HepG2 (cell line): ENCODE measurements at regions of chr1 and their contacts with region 1.

Region 1: DNA sequence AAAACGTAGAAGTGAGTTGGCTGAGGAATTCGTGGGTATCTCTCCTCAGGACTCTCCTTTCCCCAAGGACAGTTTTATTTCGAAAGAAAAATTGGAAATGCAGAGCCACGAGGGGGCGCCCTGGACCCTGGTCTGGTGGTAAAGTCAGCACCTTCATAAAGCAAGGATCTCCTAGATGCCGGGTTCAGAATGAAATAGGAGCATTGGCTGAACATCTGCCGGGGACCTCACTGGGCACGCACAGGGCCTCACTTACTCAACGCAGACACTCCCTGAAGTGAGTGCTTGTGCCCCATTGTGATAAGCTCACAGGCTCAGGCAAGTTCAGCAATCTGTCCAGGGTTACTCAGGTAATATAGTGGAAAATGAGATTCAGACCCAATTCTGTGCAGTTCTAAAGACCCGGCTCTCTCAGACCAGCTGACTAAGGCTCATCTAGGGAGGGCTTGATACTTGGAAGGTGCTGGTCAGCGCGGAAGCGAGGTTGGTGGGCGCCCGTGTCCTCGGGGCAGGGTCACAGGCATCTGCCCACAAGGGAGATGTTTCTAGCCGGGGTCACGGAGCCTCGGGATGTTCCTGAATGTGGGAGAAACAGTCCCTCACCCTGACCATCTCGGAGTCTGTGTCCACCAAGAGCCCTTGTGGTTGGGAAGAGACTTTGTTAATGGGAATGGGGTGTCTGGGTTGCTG is 55.7 kb upstream of the ETV3 start:
- DNase-seq: peak; percentile 47
- ATAC-seq: peak; percentile 60
- H3K4me3 ChIP-seq: no peak overlapping the region
- H3K27ac ChIP-seq: no peak overlapping the region
- H3K4me1 ChIP-seq: peaks cover 16% of the 10 kb centered on the region; the same call in 1 of the 2 replicates
- H3K27me3 ChIP-seq: peaks cover 2 to 18% of the 10 kb centered on the region in 2 experiments; a peak in 4 of 5 replicates
- CTCF ChIP-seq: peak; percentile 79
- EP300 ChIP-seq: no peak
- POLR2A ChIP-seq: no peak
- RAD21 ChIP-seq: peak; percentile 62

Region 2: DNA sequence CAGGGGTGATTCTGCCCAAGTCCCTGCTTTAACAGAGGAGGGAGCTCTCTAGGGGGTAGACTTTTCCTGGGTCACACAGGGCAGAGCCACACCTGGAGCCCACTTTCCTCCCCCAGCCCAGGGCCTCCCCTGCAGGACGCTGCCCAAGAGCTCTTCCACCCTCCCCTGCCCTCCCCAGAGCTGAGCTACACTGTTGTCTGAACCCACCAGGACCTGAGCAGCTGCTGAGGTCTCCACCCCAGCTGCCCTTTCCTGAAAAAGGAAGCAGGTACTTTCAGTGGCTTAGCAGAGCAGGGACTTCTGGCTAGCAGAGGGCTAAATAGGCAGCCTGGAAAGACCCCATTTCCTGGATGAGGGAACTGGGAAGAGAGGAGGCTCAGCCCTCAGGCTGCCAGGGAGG is 113.6 kb after region 1 on chr1:
- CTCF ChIA-PET with region 1: interaction called, 8 read pairs
- POLR2A ChIA-PET with region 1: no interaction called
- in situ Hi-C with region 1: loop called (anchors 5 kb)
- intact Hi-C with region 1: loop called (anchors 1 kb)
- DNase-seq: no peak
- ATAC-seq: no peak
- H3K4me3 ChIP-seq: no peak overlapping the region
- H3K27ac ChIP-seq: no peak overlapping the region
- H3K4me1 ChIP-seq: peaks cover 4% of the 10 kb centered on the region; the same call in 1 of the 2 replicates
- H3K27me3 ChIP-seq: peaks cover 0 to 2% of the 10 kb centered on the region in 2 experiments; a peak in 1 of 5 replicates
- CTCF ChIP-seq: no peak
- EP300 ChIP-seq: no peak
- POLR2A ChIP-seq: no peak
- RAD21 ChIP-seq: no peak

Region 3: DNA sequence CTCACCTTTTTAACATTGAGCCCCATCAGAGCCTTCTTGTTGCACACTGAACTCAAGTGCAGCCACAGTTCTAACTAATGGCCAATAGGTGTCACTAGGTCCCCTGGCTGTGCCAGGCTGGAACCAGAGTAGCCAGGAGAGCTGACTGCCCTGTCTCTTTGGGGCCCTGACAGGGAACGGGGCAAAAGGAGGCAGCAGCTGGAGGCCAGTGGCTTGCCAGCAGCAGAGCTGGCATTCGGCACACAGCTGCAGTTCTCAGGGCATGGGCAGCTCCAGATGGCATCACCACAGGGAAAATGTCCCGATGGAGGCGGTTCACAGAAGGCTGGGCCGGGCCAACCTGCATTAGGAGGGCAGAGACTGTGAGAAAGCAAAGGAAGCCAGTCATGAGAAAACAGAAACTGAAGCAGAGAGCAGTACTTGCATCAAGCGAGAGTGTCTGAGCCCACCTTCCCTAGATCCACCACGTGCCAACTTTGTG is 169.9 kb after region 1 on chr1:
- CTCF ChIA-PET with region 1: no interaction called
- POLR2A ChIA-PET with region 1: no interaction called
- in situ Hi-C with region 1: no loop called
- intact Hi-C with region 1: loop called (anchors 5 kb)
- DNase-seq: peak; percentile 41
- ATAC-seq: peak; percentile 99
- H3K4me3 ChIP-seq: no peak overlapping the region
- H3K27ac ChIP-seq: no peak overlapping the region
- H3K4me1 ChIP-seq: peaks cover 7% of the 10 kb centered on the region; the same call in 1 of the 2 replicates
- H3K27me3 ChIP-seq: no peaks in the 10 kb centered on the region
- CTCF ChIP-seq: peak; percentile 75
- EP300 ChIP-seq: no peak
- POLR2A ChIP-seq: no peak
- RAD21 ChIP-seq: no peak

Region 4: DNA sequence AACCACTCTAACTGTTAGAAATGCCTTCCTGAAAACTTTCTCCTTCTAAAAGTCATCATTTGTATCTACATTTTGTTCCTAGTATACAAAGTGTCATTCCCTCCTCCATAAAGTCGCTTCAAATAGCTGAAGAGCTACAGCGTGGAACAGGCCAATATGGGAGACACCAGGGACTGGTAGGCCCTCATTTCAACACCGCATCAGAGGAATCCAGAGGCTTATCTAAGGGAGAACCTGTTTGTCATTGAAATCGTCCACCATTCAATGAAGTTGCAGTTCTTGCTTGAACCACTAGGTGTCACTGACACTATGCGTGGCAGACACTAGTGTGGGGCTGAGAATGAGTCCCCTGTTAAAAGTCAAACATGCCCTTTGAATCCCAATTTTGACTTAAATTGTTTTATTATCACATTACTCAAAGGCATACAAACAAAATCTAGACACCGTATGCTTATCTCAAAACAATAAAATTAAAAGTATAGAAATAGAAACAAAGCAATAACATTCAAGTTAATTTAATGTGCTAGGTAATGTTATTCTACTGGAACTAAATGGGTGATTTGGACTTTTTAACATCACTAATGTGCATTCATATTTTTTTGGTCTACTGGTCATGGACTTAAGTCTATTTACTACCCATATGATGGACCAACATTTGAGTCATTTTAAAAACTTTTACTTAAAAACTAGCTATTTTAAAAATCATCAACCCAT is 176.1 kb after region 1 on chr1:
- CTCF ChIA-PET with region 1: interaction called, 4 read pairs
- POLR2A ChIA-PET with region 1: no interaction called
- in situ Hi-C with region 1: loop called (anchors 10 kb)
- intact Hi-C with region 1: no loop called
- DNase-seq: peak; percentile 52
- ATAC-seq: peak; percentile 89
- H3K4me3 ChIP-seq: no peak overlapping the region
- H3K27ac ChIP-seq: no peak overlapping the region
- H3K4me1 ChIP-seq: peaks cover 7% of the 10 kb centered on the region; the same call in 1 of the 2 replicates
- H3K27me3 ChIP-seq: no peaks in the 10 kb centered on the region
- CTCF ChIP-seq: peak; percentile 82
- EP300 ChIP-seq: no peak
- POLR2A ChIP-seq: no peak
- RAD21 ChIP-seq: peak; percentile 45; the same call in 1 of the 2 replicates